ENCODE measurements at regions of chr15 and their contacts with region 1.

Region 1: GRCh38 chr15:26891448-26892181 is 24.8 kb downstream of the GABRA5 start:
- DNase-seq: peak; percentile 36
- ATAC-seq: peak; percentile 87
- H3K4me3 ChIP-seq: no peak overlapping the region
- H3K27ac ChIP-seq: no peak overlapping the region
- H3K4me1 ChIP-seq: peaks cover 9% of the 10 kb centered on the region
- H3K27me3 ChIP-seq: 0 out of 5 replicates have a peak, but pooled peaks cover 0 to 1% of the 10 kb centered on the region in 2 experiments
- CTCF ChIP-seq: peak; percentile 87
- EP300 ChIP-seq: no peak
- POLR2A ChIP-seq: no peak
- RAD21 ChIP-seq: peak; percentile 21; the same call in 1 of the 2 replicates

Region 2: DNA sequence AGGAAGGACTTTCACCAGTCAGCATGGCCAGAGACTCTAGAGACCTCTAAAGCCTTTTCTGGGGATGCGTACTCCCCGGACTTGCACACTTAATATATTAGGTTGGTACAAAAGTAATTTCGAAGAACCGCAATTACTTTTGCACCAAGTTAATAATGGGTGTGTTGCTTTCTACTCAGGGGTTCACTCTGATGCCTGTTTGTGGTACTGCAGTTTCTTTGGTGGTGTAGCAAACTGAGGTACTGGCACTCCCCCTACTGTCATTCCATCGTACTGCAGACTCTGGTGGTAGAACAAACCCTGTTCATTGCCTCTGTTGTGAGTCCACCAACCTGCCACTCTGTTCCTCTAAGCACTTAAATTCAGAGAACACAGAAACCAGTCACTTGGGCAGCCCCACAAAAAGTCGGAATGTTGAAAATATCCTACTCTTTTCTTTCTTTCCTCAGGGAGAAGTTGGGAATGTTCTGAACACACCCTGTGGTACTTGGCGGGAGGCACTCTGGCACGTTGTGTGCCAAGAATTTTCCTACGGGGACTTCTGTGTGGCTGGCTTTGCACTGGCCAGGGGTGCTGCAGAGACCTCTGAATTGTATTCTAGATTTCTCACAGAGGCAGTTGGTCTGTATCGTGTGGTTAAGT is 125.7 kb after region 1 on chr15:
- CTCF ChIA-PET with region 1: interaction called, 65 read pairs
- POLR2A ChIA-PET with region 1: no interaction called
- in situ Hi-C with region 1: loop called (anchors 5 kb)
- intact Hi-C with region 1: loop called (anchors 1 kb)
- DNase-seq: peak; percentile 73
- ATAC-seq: peak; percentile 99
- H3K4me3 ChIP-seq: no peak overlapping the region
- H3K27ac ChIP-seq: no peak overlapping the region
- H3K4me1 ChIP-seq: no peaks in the 10 kb centered on the region
- H3K27me3 ChIP-seq: peaks cover 0 to 2% of the 10 kb centered on the region in 2 experiments; a peak in 1 of 5 replicates
- CTCF ChIP-seq: peak; percentile 83
- EP300 ChIP-seq: no peak
- POLR2A ChIP-seq: no peak
- RAD21 ChIP-seq: peak; percentile 69

Region 3: GRCh38 chr15:27358751-27359434 is 467.3 kb after region 1 on chr15:
- CTCF ChIA-PET with region 1: interaction called, 4 read pairs
- POLR2A ChIA-PET with region 1: no interaction called
- in situ Hi-C with region 1: loop called (anchors 5 kb)
- intact Hi-C with region 1: loop called (anchors 2 kb)
- DNase-seq: peak; percentile 5
- ATAC-seq: peak; percentile 71
- H3K4me3 ChIP-seq: no peak overlapping the region
- H3K27ac ChIP-seq: no peak overlapping the region
- H3K4me1 ChIP-seq: no peaks in the 10 kb centered on the region
- H3K27me3 ChIP-seq: no peaks in the 10 kb centered on the region
- CTCF ChIP-seq: peak; percentile 76
- EP300 ChIP-seq: no peak
- POLR2A ChIP-seq: no peak
- RAD21 ChIP-seq: peak; percentile 49; the same call in 1 of the 2 replicates

Region 4: DNA sequence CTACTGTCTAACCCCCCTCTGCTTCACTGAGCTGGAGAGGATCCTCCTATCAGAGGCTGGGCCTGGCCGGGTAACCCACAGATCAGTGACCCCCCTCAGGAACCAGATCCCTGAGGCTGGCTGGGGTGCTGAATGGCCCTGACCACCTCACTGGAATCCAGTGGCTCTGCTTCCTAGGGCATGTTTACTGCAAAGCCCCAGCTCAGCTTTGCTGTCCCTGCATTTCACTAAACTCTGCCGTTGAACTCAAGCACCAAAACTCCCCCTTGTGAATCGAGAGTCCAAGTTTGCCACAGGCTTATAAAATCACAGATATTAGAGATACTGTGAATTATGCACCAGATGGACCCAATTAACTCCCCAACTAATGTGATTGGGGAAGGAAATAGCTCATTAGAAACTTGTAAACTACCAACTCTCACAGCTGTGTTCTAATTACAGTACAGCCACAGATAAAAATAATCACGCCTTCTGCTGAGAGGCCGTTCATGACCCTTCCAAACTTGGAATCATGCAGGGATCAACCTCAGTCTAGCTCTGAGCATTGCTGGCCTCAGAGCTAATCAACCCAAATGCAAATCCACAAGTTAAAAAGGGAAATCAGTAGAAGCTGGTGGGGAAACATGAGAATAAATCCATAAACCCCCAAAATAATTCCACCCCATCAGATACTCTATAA is 1160.5 kb after region 1 on chr15:
- CTCF ChIA-PET with region 1: no interaction called
- POLR2A ChIA-PET with region 1: no interaction called
- in situ Hi-C with region 1: no loop called
- intact Hi-C with region 1: loop called (anchors 5 kb)
- DNase-seq: no peak
- ATAC-seq: no peak
- H3K4me3 ChIP-seq: no peak overlapping the region
- H3K27ac ChIP-seq: no peak overlapping the region
- H3K4me1 ChIP-seq: no peaks in the 10 kb centered on the region
- H3K27me3 ChIP-seq: no peaks in the 10 kb centered on the region
- CTCF ChIP-seq: no peak
- EP300 ChIP-seq: no peak
- POLR2A ChIP-seq: no peak
- RAD21 ChIP-seq: no peak